ENCODE measurements at regions of chr13 and their contacts with region 1.

Region 1: GRCh38 chr13:52652196-52652979 is at the start of gene SUGT1:
- DNase-seq: peak; percentile 96
- ATAC-seq: peak; percentile 97
- H3K4me3 ChIP-seq: peak within 1 kb of the TSS; percentile 93 to 99
- H3K27ac ChIP-seq: peak within 1 kb of the TSS; percentile 92
- H3K4me1 ChIP-seq: peaks cover 4 to 14% of the 10 kb centered on the region in 2 experiments; a peak in 3 of 4 replicates
- H3K27me3 ChIP-seq: no peaks in the 10 kb centered on the region
- CTCF ChIP-seq: peak in 2 of 3 experiments; percentile 65 to 70; a peak in 4 of 6 replicates
- POLR2A ChIP-seq: no peak
- RAD21 ChIP-seq: no peak
- total RNA-seq, gene SUGT1: 75.6 TPM

Region 2: DNA sequence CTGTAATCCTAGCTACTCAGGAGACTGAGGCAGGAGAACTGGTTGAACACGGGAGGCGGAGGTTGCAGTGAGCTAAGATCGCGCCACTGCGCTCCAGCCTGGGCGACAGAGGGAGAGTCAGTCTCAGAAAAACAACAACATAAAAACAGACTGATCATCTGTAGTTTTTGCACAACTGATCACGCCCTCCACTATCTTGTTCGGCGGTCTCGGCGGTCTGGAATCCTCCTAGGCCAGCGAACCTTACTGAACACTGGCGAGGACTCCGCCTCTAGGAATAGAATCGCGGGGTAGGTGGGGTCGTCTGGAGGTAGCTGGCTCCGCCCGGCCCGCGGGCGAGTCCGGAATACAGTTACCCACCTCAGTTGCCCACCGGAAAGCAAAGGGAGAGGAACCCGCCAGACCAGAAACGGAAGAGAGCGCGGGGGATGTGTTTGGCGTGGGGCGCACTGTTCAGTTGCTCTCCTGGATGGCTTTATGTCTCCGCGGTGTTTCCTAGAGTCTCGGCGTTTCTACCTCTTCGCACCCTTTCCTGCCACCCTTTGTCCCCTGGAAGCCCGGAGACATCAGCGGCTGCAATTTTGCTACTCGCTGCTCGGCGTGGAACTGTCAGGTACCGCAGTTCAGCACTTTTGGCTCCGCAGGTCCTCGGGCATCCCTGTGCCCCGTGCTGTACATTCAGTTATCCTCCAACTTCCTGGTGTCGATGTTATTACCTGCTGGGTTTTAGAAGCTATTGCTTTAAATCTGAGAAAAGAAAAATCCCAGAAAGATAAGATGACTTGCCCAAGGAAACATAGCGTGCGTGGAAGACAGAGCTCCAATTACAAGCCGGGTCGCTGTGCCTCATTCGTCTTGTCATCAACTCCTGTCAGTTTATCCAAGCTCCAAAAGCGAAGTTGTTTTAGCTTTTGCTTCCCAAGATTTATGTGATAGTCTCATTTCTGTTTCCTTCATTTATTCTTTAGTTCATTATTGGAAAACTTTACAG is 35.0 kb before region 1 on chr13:
- CTCF ChIA-PET with region 1: interaction called, 5 read pairs
- POLR2A ChIA-PET with region 1: interaction called, 32 read pairs
- RAD21 ChIA-PET with region 1: interaction called in 1 of 2 experiments, 4 read pairs
- intact Hi-C with region 1: loop called (anchors 1 kb)
- DNase-seq: peak; percentile 78
- ATAC-seq: peak; percentile 96
- H3K4me3 ChIP-seq: peak overlapping the region; percentile 68 to 84
- H3K27ac ChIP-seq: peak overlapping the region; percentile 74
- H3K4me1 ChIP-seq: peaks cover 14 to 23% of the 10 kb centered on the region in 2 experiments
- H3K27me3 ChIP-seq: no peaks in the 10 kb centered on the region
- CTCF ChIP-seq: no peak
- POLR2A ChIP-seq: no peak
- RAD21 ChIP-seq: 0 out of 2 replicates have a peak, but pooled peaks have one; percentile 5

Region 3: GRCh38 chr13:52638666-52639328 is 13.6 kb before region 1 on chr13:
- CTCF ChIA-PET with region 1: no interaction called
- POLR2A ChIA-PET with region 1: interaction called, 12 read pairs
- RAD21 ChIA-PET with region 1: no interaction called
- intact Hi-C with region 1: no loop called
- DNase-seq: no peak
- ATAC-seq: no peak
- H3K4me3 ChIP-seq: no peak overlapping the region
- H3K27ac ChIP-seq: no peak overlapping the region
- H3K4me1 ChIP-seq: no peaks in the 10 kb centered on the region
- H3K27me3 ChIP-seq: no peaks in the 10 kb centered on the region
- CTCF ChIP-seq: no peak
- POLR2A ChIP-seq: no peak
- RAD21 ChIP-seq: no peak

Region 4: DNA sequence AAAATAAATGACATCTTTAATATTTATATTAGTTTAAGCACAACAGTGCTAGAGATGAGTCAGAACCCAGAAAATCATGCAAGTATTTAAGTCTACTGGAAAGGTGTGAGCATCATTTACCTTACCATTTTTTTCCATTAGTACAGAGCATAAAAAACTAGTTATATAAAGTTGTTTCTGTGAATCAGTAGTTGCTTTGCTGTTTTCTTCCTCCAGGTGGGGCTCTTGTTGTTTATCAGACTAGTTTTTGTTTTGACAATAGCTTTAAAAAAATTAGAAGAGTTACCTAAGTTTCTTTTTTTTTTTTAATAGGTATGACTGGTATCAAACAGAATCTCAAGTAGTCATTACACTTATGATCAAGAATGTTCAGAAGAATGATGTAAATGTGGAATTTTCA is 12.9 kb after region 1 on chr13:
- CTCF ChIA-PET with region 1: interaction called, 13 read pairs
- POLR2A ChIA-PET with region 1: interaction called, 9 read pairs
- RAD21 ChIA-PET with region 1: no interaction called
- intact Hi-C with region 1: no loop called
- DNase-seq: peak; percentile 16
- ATAC-seq: no peak
- H3K4me3 ChIP-seq: no peak overlapping the region
- H3K27ac ChIP-seq: no peak overlapping the region
- H3K4me1 ChIP-seq: no peaks in the 10 kb centered on the region
- H3K27me3 ChIP-seq: no peaks in the 10 kb centered on the region
- CTCF ChIP-seq: peak; percentile 20 to 61 (median 54); a peak in 4 of 6 replicates
- POLR2A ChIP-seq: no peak
- RAD21 ChIP-seq: no peak

Measured in HCT116 (cell line).